Common myeloid progenitor, CD34-positive (primary cell): ENCODE measurements at regions of chr1 and their contacts with region 1.

Region 1: GRCh38 chr1:92485381-92486257 is 1.1 kb downstream of the GFI1 start:
- DNase-seq: peak; percentile 70 to 93 (median 89)
- H3K4me3 ChIP-seq: peak overlapping the region; percentile 42 to 96 (median 82)
- H3K27ac ChIP-seq: peak overlapping the region in 1 of 2 experiments; percentile 64
- H3K4me1 ChIP-seq: peaks cover 0 to 57% (median 49%) of the 10 kb centered on the region in 4 experiments
- H3K27me3 ChIP-seq: peaks cover 0 to 5% (median 0%) of the 10 kb centered on the region in 5 experiments

Region 2: GRCh38 chr1:92461364-92462097 is 24.1 kb before region 1 on chr1:
- CTCF ChIA-PET with region 1: interaction called, 16 read pairs
- POLR2A ChIA-PET with region 1: interaction called, 10 read pairs
- DNase-seq: peak; percentile 66 to 89 (median 84)
- H3K4me3 ChIP-seq: peak overlapping the region in 2 of 7 experiments; percentile 17 to 27
- H3K27ac ChIP-seq: peak overlapping the region; percentile 88 to 92
- H3K4me1 ChIP-seq: peaks cover 48 to 92% (median 71%) of the 10 kb centered on the region in 4 experiments
- H3K27me3 ChIP-seq: no peaks in the 10 kb centered on the region

Region 3: GRCh38 chr1:92473781-92474495 is 11.7 kb before region 1 on chr1:
- CTCF ChIA-PET with region 1: interaction called, 14 read pairs
- POLR2A ChIA-PET with region 1: interaction called, 5 read pairs
- DNase-seq: no peak
- H3K4me3 ChIP-seq: no peak overlapping the region
- H3K27ac ChIP-seq: no peak overlapping the region
- H3K4me1 ChIP-seq: peaks cover 12 to 56% (median 20%) of the 10 kb centered on the region in 4 experiments
- H3K27me3 ChIP-seq: no peaks in the 10 kb centered on the region